IMR-90 (cell line): ENCODE measurements at regions of chr16 and their contacts with region 1.

Region 1: GRCh38 chr16:81473558-81473957 is 28.9 kb downstream of the CMIP start:
- DNase-seq: peak; percentile 54
- ATAC-seq: peak; percentile 52
- H3K4me3 ChIP-seq: no peak overlapping the region
- H3K27ac ChIP-seq: no peak overlapping the region
- H3K4me1 ChIP-seq: peaks cover 11% of the 10 kb centered on the region
- H3K27me3 ChIP-seq: no peaks in the 10 kb centered on the region
- CTCF ChIP-seq: no peak
- POLR2A ChIP-seq: no peak
- RAD21 ChIP-seq: no peak

Region 2: GRCh38 chr16:81451753-81452680 is 21.5 kb before region 1 on chr16:
- CTCF ChIA-PET with region 1: no interaction called
- POLR2A ChIA-PET with region 1: interaction called, 22 read pairs
- dilution Hi-C with region 1: no loop called
- in situ Hi-C with region 1: no loop called
- intact Hi-C with region 1: no loop called
- DNase-seq: peak; percentile 11
- ATAC-seq: no peak
- H3K4me3 ChIP-seq: no peak overlapping the region
- H3K27ac ChIP-seq: no peak overlapping the region
- H3K4me1 ChIP-seq: peaks cover 5% of the 10 kb centered on the region; the same call in 1 of the 2 replicates
- H3K27me3 ChIP-seq: no peaks in the 10 kb centered on the region
- CTCF ChIP-seq: no peak
- POLR2A ChIP-seq: no peak
- RAD21 ChIP-seq: no peak